Activated CD8-positive, alpha-beta memory T cell treated with anti-CD3 and anti-CD28 coated beads, Interleukin-2, amount 10 ng/mL, durations not matched to agents 7 days and 5 days (primary cell): ENCODE measurements at regions of chr19 and their contacts with region 1.

Region 1: DNA sequence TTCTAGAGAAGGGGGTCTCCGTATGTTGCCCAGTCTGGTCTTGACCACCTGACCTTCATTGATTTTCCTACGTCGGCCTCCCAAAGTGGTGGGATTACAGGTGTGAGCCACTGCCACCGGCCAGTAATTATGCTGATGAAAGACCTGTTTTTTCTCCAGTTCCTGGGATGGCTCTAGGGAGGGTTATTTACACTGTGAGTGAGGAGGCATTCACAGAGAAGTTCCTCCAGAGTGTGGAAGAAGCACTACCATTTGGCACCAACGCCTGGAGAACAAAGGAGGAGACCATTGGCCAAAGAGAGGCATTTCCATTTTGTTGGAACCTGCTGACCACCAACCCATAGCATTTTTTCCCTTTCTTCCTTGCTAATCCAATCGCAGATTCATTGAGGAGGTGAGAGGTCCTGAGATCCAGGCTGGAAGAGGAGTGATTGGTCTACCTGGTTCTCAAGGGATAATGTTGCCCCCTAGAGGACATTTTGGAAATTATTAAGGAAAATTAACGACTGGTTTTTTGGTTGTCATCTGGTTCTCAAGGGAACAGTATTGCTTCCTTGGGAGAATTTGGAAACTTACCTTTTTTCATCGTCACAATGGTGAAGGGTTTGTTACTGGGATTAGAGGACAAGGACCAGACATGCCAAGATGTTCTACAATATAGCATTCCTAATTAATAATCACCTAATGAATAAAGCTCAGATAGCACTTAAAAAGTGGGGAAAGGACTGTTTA is 5.5 kb upstream of the SAE1 start:
- DNase-seq: no peak
- ATAC-seq: peak; percentile 63
- H3K4me3 Mint-ChIP-seq: no peak overlapping the region
- H3K27ac Mint-ChIP-seq: peak overlapping the region; percentile 47
- H3K4me1 Mint-ChIP-seq: peaks cover 4% of the 10 kb centered on the region
- H3K27me3 Mint-ChIP-seq: no peaks in the 10 kb centered on the region

Region 2: GRCh38 chr19:47035127-47036096 is 89.7 kb before region 1 on chr19:
- CTCF ChIA-PET with region 1: interaction called, 12 read pairs
- DNase-seq: peak; percentile 96
- ATAC-seq: peak; percentile 93
- H3K4me3 Mint-ChIP-seq: peak overlapping the region; percentile 88
- H3K27ac Mint-ChIP-seq: peak overlapping the region; percentile 79
- H3K4me1 Mint-ChIP-seq: peaks cover 17% of the 10 kb centered on the region
- H3K27me3 Mint-ChIP-seq: peaks cover 27% of the 10 kb centered on the region

Region 3: DNA sequence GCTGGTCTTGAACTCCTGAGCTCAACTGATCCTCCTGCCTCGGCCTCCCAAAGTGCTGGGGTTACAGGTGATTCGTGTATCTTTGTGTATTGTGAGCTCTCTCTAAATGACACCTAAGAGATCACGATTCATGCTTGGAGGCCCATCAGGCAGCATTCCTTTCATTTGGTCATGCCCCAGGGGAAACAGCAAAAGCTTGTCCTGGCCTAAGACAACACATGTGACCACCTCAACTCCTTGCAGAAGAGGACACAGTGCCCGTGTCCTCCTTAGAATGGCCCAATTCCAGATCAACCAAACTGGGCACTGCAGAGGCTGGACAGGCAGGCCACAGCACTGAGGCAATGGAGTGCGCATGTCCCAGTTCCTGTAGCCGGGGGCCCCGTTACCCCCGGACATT is 44.0 kb before region 1 on chr19:
- CTCF ChIA-PET with region 1: interaction called, 56 read pairs
- DNase-seq: no peak
- ATAC-seq: no peak
- H3K4me3 Mint-ChIP-seq: no peak overlapping the region
- H3K27ac Mint-ChIP-seq: peak overlapping the region; percentile 36
- H3K4me1 Mint-ChIP-seq: no peaks in the 10 kb centered on the region
- H3K27me3 Mint-ChIP-seq: no peaks in the 10 kb centered on the region

Region 4: GRCh38 chr19:47112997-47113849 is 11.9 kb before region 1 on chr19 and contains the start of gene ZC3H4:
- CTCF ChIA-PET with region 1: interaction called, 17 read pairs
- DNase-seq: peak; percentile 100
- ATAC-seq: peak; percentile 86
- H3K4me3 Mint-ChIP-seq: peak within 1 kb of the TSS; percentile 95
- H3K27ac Mint-ChIP-seq: peak within 1 kb of the TSS; percentile 100
- H3K4me1 Mint-ChIP-seq: peaks cover 24% of the 10 kb centered on the region
- H3K27me3 Mint-ChIP-seq: no peaks in the 10 kb centered on the region
- total RNA-seq, gene ZC3H4: 98.9 to 114 TPM

Region 5: DNA sequence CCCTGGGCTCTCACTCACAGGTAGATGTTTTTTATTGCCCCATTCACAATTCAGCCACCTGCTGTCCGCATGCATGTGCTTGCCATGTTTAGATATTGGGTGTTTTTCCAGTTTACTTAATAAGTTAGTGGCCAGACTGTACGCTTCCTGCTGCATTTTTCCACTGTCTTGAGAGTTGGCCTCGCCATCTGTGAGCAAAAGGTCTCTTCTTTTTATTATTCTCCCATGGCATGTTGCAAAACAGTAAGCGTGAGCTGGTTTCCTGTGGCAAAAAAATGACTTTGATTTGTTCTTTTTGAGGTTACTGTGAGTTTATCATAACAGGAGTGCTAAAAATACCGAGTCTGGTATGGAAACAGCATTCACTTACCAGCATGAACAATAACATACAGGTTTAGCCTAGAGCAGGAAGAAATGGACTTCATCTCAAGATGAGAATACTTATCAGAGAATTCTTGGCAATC is 51.6 kb after region 1 on chr19:
- CTCF ChIA-PET with region 1: no interaction called
- DNase-seq: peak; percentile 46
- ATAC-seq: peak; percentile 65
- H3K4me3 Mint-ChIP-seq: no peak overlapping the region
- H3K27ac Mint-ChIP-seq: peak overlapping the region; percentile 74
- H3K4me1 Mint-ChIP-seq: peaks cover 55% of the 10 kb centered on the region
- H3K27me3 Mint-ChIP-seq: no peaks in the 10 kb centered on the region

Region 6: GRCh38 chr19:47186446-47187334 is 61.6 kb after region 1 on chr19:
- CTCF ChIA-PET with region 1: no interaction called
- DNase-seq: peak; percentile 86
- ATAC-seq: peak; percentile 78
- H3K4me3 Mint-ChIP-seq: peak overlapping the region; percentile 31
- H3K27ac Mint-ChIP-seq: peak overlapping the region; percentile 88
- H3K4me1 Mint-ChIP-seq: peaks cover 73% of the 10 kb centered on the region
- H3K27me3 Mint-ChIP-seq: no peaks in the 10 kb centered on the region